SK-N-SH (cell line): ENCODE measurements at regions of chr19 and their contacts with region 1.

Region 1: GRCh38 chr19:43784981-43785808 is 4.4 kb upstream of the KCNN4 start:
- DNase-seq: peak; percentile 84
- H3K4me3 ChIP-seq: no peak overlapping the region; a peak in 1 of 4 replicates
- H3K27ac ChIP-seq: peak overlapping the region in 1 of 2 experiments; percentile 60; a peak in 2 of 4 replicates
- H3K4me1 ChIP-seq: peaks cover 3 to 20% of the 10 kb centered on the region in 2 experiments; a peak in 3 of 4 replicates
- H3K27me3 ChIP-seq: no peaks in the 10 kb centered on the region
- CTCF ChIP-seq: peak; percentile 99
- EP300 ChIP-seq: no peak
- RAD21 ChIP-seq: peak; percentile 94

Region 2: GRCh38 chr19:43735957-43736356 is 49.2 kb before region 1 on chr19:
- CTCF ChIA-PET with region 1: interaction called, 15 read pairs
- POLR2A ChIA-PET with region 1: interaction called, 3 read pairs
- DNase-seq: no peak
- H3K4me3 ChIP-seq: no peak overlapping the region
- H3K27ac ChIP-seq: no peak overlapping the region
- H3K4me1 ChIP-seq: peaks cover 0 to 20% of the 10 kb centered on the region in 2 experiments; a peak in 1 of 4 replicates
- H3K27me3 ChIP-seq: no peaks in the 10 kb centered on the region
- CTCF ChIP-seq: no peak
- EP300 ChIP-seq: no peak
- RAD21 ChIP-seq: no peak

Region 3: DNA sequence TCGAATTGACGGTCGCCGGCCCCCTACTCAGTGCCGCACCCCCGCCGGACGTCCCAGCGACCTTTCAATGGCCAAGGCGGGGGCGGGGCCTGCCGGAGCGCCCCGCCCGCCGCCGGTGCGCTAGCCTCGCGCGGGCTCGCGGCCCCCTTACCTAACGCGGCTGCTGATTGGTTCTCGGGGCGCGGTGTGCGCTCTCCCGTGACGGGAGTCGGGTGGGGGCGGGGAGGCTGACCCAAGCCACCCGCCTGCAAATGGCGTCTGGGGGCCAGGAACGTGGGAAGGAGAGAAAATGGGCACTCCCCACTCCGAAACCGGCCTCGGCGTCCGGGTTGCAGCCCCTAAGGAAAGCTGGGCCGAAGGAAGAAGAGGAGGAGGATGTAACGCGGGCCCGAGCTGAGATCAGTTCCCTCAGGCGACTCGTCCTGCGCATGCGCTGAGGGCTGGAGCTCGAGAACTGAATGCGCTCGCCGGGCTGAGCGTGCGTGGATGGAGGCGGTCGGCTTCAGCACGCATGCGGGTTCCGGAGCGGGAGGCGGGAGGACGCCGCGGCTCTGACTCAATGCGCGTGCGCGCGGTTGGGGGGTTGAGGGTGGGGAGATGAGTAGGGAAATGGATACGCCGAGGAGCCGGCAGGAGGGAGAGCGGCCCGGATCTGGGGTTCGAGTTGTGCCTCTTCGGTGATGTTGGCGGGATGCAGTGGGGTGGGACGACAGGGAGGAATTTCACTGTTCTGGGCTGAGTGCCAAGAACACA is 30.5 kb before region 1 on chr19 and contains the start of gene SMG9:
- CTCF ChIA-PET with region 1: interaction called, 14 read pairs
- POLR2A ChIA-PET with region 1: no interaction called
- DNase-seq: peak; percentile 97
- H3K4me3 ChIP-seq: peak within 1 kb of the TSS; percentile 74 to 87
- H3K27ac ChIP-seq: peak within 1 kb of the TSS; percentile 98 to 100
- H3K4me1 ChIP-seq: peaks cover 7 to 50% of the 10 kb centered on the region in 2 experiments; a peak in 3 of 4 replicates
- H3K27me3 ChIP-seq: no peaks in the 10 kb centered on the region
- CTCF ChIP-seq: no peak
- EP300 ChIP-seq: no peak
- RAD21 ChIP-seq: no peak
- polyA plus RNA-seq, gene SMG9: 17.3 and 24.3 TPM in 2 replicates

Region 4: GRCh38 chr19:43765109-43765876 is 19.9 kb before region 1 on chr19:
- CTCF ChIA-PET with region 1: interaction called, 47 read pairs
- POLR2A ChIA-PET with region 1: no interaction called
- DNase-seq: no peak
- H3K4me3 ChIP-seq: no peak overlapping the region
- H3K27ac ChIP-seq: peak overlapping the region; percentile 11 to 94; a peak in 3 of 4 replicates
- H3K4me1 ChIP-seq: peaks cover 0 to 21% of the 10 kb centered on the region in 2 experiments; a peak in 3 of 4 replicates
- H3K27me3 ChIP-seq: no peaks in the 10 kb centered on the region
- CTCF ChIP-seq: no peak
- EP300 ChIP-seq: peak in 1 of 2 experiments; percentile 81; a peak in 1 of 4 replicates
- RAD21 ChIP-seq: no peak

Region 5: GRCh38 chr19:43774103-43774939 is 10.9 kb before region 1 on chr19:
- CTCF ChIA-PET with region 1: interaction called, 10 read pairs
- POLR2A ChIA-PET with region 1: no interaction called
- DNase-seq: peak; percentile 87
- H3K4me3 ChIP-seq: no peak overlapping the region
- H3K27ac ChIP-seq: no peak overlapping the region
- H3K4me1 ChIP-seq: peaks cover 11 to 19% of the 10 kb centered on the region in 2 experiments; a peak in 3 of 4 replicates
- H3K27me3 ChIP-seq: no peaks in the 10 kb centered on the region
- CTCF ChIP-seq: 0 out of 2 replicates have a peak, but pooled peaks have one; percentile 16
- EP300 ChIP-seq: no peak
- RAD21 ChIP-seq: no peak

Region 6: DNA sequence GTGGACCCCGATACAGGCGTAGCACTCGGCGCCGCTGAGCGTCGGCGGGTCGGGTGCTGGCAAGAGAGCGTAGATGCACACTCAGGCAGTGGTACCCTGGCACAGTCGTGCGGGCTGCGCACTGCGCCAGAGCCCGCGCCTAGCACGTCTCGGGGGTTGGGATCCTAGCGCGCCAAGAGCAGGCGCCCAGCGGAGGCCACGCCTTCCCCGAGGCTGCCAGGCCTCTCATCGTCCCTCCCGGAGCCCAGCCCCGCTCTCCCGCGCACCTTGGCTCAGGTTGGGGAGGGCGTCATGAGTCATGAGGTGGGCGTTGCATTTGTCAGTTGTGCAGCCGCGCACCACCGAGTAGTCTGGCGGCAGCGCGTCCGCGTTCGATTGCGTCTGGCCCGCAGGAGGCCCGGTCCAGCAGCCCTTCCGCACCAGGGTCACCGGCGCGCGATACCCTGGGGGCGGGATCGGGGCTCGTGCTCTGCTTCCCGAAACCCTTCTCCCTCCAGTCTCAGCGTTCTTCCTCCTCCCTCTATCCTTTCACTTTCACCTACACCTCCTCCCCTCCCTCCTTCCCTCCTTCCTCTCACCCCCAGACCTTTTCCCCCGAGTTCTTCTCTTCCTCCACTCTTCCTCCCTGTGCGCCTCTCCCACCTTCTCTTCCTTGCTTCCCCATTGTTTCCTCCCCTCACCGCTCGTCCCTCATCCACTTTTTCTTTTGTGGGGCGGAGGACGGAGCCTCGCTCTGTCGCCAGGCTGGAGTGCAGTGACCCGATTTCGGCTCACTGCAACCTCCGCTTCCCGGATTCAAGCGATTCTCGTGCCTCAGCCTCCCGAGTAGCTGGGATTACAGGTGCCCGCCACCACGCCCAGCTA is 13.6 kb after region 1 on chr19:
- CTCF ChIA-PET with region 1: interaction called, 14 read pairs
- POLR2A ChIA-PET with region 1: no interaction called
- DNase-seq: peak; percentile 65
- H3K4me3 ChIP-seq: peak overlapping the region; percentile 32 to 34
- H3K27ac ChIP-seq: no peak overlapping the region
- H3K4me1 ChIP-seq: peaks cover 0 to 7% of the 10 kb centered on the region in 2 experiments; a peak in 1 of 4 replicates
- H3K27me3 ChIP-seq: peaks cover 18% of the 10 kb centered on the region; the same call in 1 of the 2 replicates
- CTCF ChIP-seq: no peak
- EP300 ChIP-seq: no peak
- RAD21 ChIP-seq: no peak

Region 7: DNA sequence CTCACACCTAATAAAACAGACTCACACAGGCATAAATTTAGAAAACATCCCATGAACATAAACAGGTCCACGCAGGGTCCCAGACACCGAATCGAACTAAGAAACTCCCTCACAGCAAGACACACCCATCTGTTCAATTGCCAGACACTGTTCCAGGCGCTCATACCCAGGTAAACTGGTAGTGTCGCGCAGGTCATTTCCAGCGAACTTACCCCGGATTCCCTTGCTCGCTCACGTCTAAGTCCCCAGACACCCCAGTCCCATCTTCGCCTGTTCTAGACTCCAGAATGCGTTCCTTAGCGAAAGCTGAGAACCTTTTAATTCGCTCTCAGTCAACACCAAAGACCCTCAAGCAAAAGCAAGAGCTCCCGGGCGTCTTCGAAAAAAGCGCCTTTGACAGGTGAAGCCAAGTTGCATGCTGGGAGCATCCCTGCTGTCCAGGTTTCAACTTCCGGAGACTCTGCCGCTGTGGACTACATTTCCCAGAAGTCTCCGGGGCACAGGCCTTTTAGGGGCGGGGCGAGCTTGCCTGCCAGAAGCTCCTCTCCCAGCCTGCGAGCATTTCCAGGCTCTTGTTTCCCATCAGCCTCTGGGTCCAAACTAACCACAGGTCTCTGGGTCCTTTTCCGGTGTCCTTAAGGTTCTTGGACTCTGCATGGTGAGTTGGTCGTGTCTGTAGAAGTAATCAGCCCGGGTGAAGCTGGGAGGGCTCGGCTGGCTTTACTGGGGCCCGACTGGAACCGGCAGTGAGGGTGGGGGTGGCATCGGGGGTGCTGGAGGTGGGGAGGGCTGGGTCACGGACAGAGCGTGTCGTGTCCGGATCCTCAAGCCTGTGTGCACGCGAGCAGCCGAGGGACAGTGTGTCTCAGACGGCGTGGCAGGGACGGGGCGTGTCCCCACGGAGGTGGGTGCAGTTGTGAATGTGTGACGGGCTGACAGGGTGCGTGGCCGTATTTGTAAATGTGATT is 41.9 kb after region 1 on chr19 and contains the start of gene ZNF283:
- CTCF ChIA-PET with region 1: no interaction called
- POLR2A ChIA-PET with region 1: no interaction called
- DNase-seq: peak; percentile 90
- H3K4me3 ChIP-seq: peak within 1 kb of the TSS; percentile 70 to 82
- H3K27ac ChIP-seq: peak within 1 kb of the TSS; percentile 37 to 65; a peak in 3 of 4 replicates
- H3K4me1 ChIP-seq: peaks cover 0 to 4% of the 10 kb centered on the region in 2 experiments; a peak in 1 of 4 replicates
- H3K27me3 ChIP-seq: no peaks in the 10 kb centered on the region
- CTCF ChIP-seq: no peak
- EP300 ChIP-seq: no peak
- RAD21 ChIP-seq: no peak
- polyA plus RNA-seq, gene ZNF283: 1.6 and 2.6 TPM in 2 replicates

Region 8: DNA sequence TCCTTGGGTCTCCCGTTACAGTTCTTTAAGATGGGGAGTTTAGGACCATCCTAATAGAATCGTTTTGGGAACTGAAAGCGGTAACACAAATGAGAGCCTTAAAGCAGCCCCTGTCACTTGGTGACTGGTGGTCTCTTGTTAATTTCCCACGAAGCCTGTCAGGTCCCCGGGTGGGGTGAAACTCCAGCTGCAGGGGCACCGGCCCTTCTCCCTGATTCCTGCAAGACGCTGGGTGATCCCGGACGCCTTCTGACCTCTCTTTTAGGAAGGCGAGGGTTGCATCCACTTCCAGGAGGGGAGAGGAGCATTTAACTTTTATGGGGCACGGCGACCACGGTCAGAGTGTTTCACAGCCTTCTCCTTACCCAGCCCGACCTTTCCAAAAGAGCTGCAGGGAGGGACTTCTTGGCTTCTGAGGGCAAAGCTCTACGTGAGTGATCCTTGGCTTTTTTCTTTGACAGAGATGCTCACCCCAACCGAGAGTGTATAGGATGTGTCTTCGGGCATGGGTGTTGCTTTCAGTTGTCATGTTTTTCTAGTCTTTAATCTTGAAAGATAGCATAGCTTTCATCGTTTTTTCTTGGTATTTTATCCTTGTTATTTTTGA is 328.7 kb after region 1 on chr19:
- CTCF ChIA-PET with region 1: no interaction called
- POLR2A ChIA-PET with region 1: no interaction called
- DNase-seq: peak; percentile 30
- H3K4me3 ChIP-seq: peak overlapping the region; percentile 80 to 96
- H3K27ac ChIP-seq: peak overlapping the region; percentile 50 to 84; a peak in 3 of 4 replicates
- H3K4me1 ChIP-seq: peaks cover 0 to 7% of the 10 kb centered on the region in 2 experiments; a peak in 1 of 4 replicates
- H3K27me3 ChIP-seq: no peaks in the 10 kb centered on the region
- CTCF ChIP-seq: no peak
- EP300 ChIP-seq: no peak
- RAD21 ChIP-seq: no peak